Tibial artery (tissue), 4 donors: ENCODE measurements at regions of chr12 and their contacts with region 1.

Region 1: GRCh38 chr12:75505706-75506312 is 5.6 kb downstream of the KRR1 start:
- DNase-seq: no peak
- H3K4me3 ChIP-seq: no peak overlapping the region
- H3K27ac ChIP-seq: no peak overlapping the region
- H3K4me1 ChIP-seq: peaks cover 0 to 30% (median 13%) of the 10 kb centered on the region in 4 donors
- H3K27me3 ChIP-seq: no peaks in the 10 kb centered on the region
- CTCF ChIP-seq: peak; percentile 48 to 50

Region 2: DNA sequence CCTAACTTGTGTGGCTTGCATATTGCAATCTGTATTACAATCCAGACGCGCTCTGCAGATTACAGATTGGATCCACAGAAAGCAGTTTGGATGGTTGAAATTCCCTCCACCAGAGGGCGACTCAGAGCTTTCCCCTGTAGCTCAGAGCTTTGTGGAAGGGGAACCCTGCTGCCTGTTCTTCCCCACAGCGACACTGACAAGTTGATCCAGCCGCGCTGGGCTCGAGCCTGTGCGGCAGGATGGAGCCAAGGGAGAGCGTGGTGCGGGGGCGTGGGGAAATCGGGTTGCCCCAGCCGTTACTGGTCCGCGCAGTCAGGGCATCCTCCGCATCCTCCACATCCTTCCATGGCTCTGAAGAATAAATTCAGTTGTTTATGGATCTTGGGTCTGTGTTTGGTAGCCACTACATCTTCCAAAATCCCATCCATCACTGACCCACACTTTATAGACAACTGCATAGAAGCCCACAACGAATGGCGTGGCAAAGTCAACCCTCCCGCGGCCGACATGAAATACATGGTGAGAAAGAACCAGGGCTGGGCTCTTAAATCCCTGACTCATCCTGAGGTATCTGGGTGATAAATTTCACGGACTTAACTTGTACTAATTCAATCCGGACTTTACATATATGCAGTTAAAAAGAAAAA is 171.3 kb before region 1 on chr12 and contains the start of gene GLIPR1L1:
- intact Hi-C with region 1: loop called (anchors 10 kb)
- DNase-seq: peak; percentile 91 to 93
- H3K4me3 ChIP-seq: peak within 1 kb of the TSS; percentile 43 to 52
- H3K27ac ChIP-seq: peak within 1 kb of the TSS; percentile 26 to 61
- H3K4me1 ChIP-seq: peaks cover 0 to 9% (median 6%) of the 10 kb centered on the region in 4 donors
- H3K27me3 ChIP-seq: no peaks in the 10 kb centered on the region
- CTCF ChIP-seq: peak; percentile 86 to 88

Region 3: DNA sequence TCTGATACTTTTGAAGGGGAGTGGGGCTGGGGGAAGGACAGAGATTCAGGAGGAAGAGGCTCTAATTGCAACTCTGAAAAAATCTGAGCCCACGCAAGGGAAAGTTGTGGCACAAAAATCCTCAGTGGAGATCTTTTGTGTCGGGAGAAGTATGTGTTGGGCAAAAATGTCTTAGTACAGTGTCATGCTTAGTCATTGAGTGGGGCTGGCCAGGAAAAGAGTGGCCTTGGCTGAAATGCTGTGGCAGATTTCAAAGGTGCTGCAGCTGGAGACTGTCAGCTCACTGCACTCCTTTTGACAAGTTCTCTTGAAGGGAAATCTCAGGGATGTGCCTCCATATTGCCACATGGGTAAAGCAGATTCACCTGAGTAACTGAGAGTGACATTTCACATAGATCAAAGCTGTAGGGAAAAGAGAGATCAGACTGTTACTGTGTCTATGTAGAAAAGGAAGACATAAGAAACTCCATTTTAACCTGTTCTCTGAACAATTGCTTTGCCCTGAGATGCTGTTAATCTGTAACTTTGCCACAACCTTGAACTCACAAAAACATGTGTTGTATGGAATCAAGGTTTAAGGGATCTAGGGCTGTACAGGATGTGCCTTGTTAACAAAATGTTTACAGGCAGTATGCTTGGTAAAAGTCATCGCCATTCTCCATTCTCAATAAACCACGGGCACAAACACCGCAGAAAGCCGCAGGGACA is 61.2 kb before region 1 on chr12:
- intact Hi-C with region 1: no loop called
- DNase-seq: no peak
- H3K4me3 ChIP-seq: no peak overlapping the region
- H3K27ac ChIP-seq: no peak overlapping the region
- H3K4me1 ChIP-seq: no peaks in the 10 kb centered on the region
- H3K27me3 ChIP-seq: no peaks in the 10 kb centered on the region
- CTCF ChIP-seq: no peak